ENCODE measurements at regions of chr5 and their contacts with region 1.

Region 1: DNA sequence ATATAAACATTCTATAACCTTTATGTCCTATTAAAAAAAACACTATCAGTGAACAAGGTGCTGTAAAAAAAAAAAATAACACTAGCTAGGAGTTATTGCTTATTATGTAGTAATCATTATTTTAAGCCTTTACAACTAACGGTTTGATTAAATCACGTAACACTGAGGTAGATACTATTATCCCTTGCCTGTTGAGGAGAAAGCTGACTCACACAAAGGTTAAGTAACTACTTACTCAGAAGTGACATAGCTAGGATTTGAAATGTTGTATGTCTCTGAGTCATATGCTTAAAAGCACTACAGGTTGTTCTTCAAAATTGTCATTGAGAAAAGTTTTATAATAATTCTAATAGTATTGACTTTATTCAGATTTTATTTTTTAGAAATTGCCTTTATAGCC is 8.8 kb downstream of the TENT2 start:
- DNase-seq: no peak
- ATAC-seq: peak; percentile 88
- H3K4me3 Mint-ChIP-seq: no peak overlapping the region
- H3K27ac Mint-ChIP-seq: no peak overlapping the region
- H3K4me1 Mint-ChIP-seq: peaks cover 39% of the 10 kb centered on the region
- H3K27me3 Mint-ChIP-seq: no peaks in the 10 kb centered on the region

Region 2: DNA sequence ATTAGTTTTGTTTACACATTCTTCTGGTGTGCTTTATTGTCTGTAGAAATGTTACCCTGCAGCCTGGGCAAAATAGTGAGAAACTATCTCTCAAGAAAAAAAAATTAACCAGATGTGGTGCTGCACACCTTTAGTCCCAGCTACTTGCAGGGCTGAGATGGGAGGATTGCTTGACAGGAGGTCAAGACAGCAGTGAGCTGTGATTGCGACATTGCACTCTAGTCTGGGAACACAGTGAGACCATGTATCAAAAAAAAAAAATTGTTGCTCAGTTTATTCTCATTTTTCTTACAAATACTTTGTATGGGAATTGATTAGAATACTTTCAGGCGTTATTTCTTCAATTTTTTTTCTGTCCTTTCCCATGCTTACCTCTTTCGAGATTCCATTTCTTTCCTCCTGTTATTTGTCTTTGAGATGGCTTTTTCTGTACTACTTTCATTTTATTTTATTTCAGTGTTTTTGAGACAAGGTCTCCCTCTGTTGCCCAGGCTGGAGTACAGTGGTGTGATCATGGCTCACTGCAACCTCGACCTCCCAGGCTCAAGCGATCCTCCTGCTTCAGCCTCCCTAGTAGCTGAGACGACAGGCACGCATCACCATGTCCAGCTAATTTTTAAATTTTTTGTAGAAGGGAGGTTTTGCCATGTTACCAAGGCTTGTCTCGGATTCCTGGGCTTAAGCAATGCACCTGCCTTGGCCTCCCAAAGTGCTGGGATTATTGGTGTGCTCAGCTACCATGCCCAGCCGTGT is 16.1 kb after region 1 on chr5:
- CTCF ChIA-PET with region 1: interaction called, 12 read pairs
- POLR2A ChIA-PET with region 1: no interaction called
- intact Hi-C with region 1: no loop called
- DNase-seq: no peak
- ATAC-seq: no peak
- H3K4me3 Mint-ChIP-seq: no peak overlapping the region
- H3K27ac Mint-ChIP-seq: no peak overlapping the region
- H3K4me1 Mint-ChIP-seq: peaks cover 18% of the 10 kb centered on the region
- H3K27me3 Mint-ChIP-seq: no peaks in the 10 kb centered on the region